OCI-LY7 (cell line): ENCODE measurements at regions of chr19 and their contacts with region 1.

Region 1: GRCh38 chr19:5719961-5720790 is at the starts of genes CATSPERD and LONP1:
- DNase-seq: peak; percentile 100
- H3K4me3 ChIP-seq: peak within 1 kb of the TSS; percentile 98
- H3K27ac ChIP-seq: peak within 1 kb of the TSS; percentile 85
- H3K4me1 ChIP-seq: peaks cover 26% of the 10 kb centered on the region
- CTCF ChIP-seq: peak; percentile 86
- total RNA-seq, gene CATSPERD: not detected in 2 replicates
- total RNA-seq, gene LONP1: 170 and 191 TPM in 2 replicates

Region 2: DNA sequence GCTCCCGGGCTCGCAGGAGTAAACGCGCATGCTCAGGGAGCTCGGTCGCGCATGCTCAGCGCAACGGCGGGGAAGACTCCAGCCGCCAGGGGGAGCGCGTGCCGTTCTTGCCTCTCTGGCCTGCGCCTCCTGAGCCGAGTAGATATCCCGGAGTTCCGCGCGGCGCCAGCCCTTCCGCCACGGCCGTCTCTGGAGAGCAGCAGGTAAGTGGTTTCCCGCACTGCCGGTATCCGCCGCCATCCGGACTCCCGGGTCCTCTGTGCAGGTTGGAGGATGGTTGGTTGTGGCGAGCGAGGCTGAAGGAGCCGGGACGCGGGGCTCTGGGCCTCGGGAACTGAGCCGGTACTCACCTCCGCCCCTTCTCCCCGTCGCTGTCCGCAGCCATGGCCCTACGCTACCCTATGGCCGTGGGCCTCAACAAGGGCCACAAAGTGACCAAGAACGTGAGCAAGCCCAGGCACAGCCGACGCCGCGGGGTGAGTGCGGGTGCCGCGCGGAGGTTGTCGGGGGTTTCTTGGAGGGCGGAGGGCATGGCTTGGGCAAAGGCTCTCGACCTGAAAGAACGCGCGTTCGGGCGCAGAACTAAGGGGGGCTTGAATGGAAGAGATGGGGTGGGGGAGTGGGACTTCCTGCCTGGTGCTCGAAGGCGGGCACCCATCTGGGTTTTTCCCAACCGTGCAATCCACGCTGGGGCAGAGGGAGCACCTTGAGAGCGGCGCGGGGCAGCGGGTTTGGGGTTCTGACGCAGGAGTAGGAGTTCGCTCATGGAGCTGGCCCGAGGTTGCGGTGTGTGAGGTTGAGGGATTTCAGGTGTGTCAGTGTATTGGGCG is 29.8 kb before region 1 on chr19 and contains the start of gene RPL36:
- CTCF ChIA-PET with region 1: interaction called, 3 read pairs
- POLR2A ChIA-PET with region 1: interaction called, 8 read pairs
- intact Hi-C with region 1: loop called (anchors 1 kb)
- DNase-seq: peak; percentile 97
- H3K4me3 ChIP-seq: peak within 1 kb of the TSS; percentile 88
- H3K27ac ChIP-seq: peak within 1 kb of the TSS; percentile 73
- H3K4me1 ChIP-seq: peaks cover 18% of the 10 kb centered on the region
- CTCF ChIP-seq: peak; percentile 85
- total RNA-seq, gene RPL36: 1,836 and 1,936 TPM in 2 replicates

Region 3: DNA sequence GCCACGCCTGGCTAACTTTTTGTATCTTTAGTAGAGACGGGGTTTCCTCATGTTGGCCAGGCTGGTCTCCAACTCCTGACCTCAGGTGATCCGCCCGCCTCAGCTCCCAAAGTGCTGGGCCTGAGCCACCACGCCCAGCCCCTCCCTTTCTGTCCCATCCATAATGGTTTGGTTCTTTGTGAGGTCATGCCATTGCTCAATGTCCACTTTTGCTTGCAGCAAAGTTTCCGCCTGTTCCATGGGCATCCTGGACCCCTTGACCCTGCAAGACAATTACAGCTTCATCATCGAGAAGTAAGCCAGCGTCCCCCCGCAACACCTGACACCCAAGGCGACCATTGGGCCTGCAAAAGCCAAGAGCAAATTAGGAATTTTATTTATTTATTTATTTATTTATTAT is 47.8 kb after region 1 on chr19:
- CTCF ChIA-PET with region 1: no interaction called
- POLR2A ChIA-PET with region 1: no interaction called
- intact Hi-C with region 1: loop called (anchors 1 kb)
- DNase-seq: no peak
- H3K4me3 ChIP-seq: no peak overlapping the region
- H3K27ac ChIP-seq: peak overlapping the region; percentile 72
- H3K4me1 ChIP-seq: peaks cover 20% of the 10 kb centered on the region
- CTCF ChIP-seq: no peak

Region 4: DNA sequence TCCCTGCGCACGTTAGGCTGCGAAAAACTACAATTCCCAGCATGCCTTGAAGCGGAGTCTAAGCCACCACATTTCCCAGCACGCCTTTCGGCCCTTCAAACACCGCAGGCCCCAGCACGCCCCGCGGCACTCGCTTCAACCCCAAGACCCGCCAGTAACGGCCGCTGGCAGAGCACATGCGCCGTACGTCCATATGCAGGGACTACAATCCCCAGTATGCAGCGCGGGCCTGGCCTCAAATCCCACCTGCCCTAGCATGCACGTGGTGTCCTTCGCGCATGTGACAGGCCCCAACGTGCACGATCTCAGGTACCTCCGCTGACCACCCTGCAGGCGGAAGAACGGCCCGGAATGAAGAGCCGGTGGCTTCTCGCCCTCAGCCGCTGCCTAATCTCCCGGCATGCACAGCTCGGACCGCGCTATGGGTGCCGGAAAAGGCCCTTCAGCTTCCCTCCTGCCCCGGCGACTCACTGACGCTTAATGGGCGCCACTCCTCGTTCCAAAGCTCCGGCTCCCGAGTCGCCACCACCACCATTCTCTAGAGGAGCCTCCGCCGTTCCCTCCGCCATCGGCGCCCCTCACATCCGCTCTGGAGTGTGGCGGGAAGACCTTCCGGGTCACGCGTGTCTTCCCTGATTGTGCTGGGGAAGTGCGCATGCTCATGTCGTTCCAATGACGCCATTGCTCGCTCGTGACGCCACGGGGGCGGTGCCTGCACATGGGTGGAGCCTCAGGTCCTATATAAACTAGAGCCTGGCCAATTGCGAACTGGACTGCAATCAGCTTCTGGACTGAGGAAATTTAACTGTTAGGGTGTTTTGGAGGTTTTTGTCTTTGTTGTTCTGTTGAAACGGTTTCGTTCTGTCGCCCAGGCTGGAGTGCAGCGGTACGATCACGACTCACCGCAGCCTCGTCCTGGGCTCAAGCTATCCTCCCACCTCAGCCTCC is 70.7 kb after region 1 on chr19 and contains the start of gene DUS3L:
- CTCF ChIA-PET with region 1: no interaction called
- POLR2A ChIA-PET with region 1: no interaction called
- intact Hi-C with region 1: loop called (anchors 2 kb)
- DNase-seq: peak; percentile 99
- H3K4me3 ChIP-seq: peak within 1 kb of the TSS; percentile 78
- H3K27ac ChIP-seq: peak within 1 kb of the TSS; percentile 81
- H3K4me1 ChIP-seq: peaks cover 9% of the 10 kb centered on the region
- CTCF ChIP-seq: no peak
- total RNA-seq, gene DUS3L: 55.8 and 63.7 TPM in 2 replicates